Activated CD4-positive, alpha-beta memory T cell treated with anti-CD3 and anti-CD28 coated beads for 36 hours (primary cell): ENCODE measurements at regions of chr19 and their contacts with region 1.

Region 1: GRCh38 chr19:10864538-10864899 is 6.8 kb upstream of the CARM1 start:
- DNase-seq: peak; percentile 91
- H3K4me3 Mint-ChIP-seq: no peak overlapping the region
- H3K27ac Mint-ChIP-seq: no peak overlapping the region
- H3K4me1 Mint-ChIP-seq: peaks cover 13% of the 10 kb centered on the region
- H3K27me3 Mint-ChIP-seq: no peaks in the 10 kb centered on the region

Region 2: DNA sequence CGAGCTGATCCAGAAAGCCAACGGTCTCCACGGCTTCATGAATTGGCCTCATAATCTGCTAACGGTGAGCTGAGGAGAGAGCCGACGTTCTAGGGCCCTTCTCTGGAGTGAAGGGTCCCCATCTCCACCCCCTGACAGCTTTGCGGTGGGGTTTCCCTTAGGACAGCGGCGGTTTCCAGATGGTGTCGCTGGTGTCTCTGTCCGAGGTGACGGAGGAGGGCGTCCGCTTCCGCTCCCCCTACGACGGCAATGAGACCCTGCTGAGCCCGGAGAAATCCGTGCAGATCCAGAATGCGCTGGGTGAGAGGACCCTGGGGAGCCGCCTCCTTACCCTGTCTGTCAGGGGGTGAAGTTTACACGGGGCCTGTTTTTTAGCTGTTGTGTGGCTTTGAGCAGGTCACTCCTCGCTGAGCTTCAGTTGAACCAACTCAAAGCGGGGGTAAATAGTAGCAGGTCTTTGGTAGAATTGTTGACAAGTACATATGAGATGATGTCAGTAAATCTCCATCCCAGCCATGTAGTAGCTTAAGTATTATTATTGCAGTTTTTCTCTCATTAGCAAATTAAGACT is 162.5 kb before region 1 on chr19:
- CTCF ChIA-PET with region 1: interaction called, 26 read pairs
- POLR2A ChIA-PET with region 1: no interaction called
- intact Hi-C with region 1: no loop called
- DNase-seq: peak; percentile 47
- H3K4me3 Mint-ChIP-seq: peak overlapping the region; percentile 88
- H3K27ac Mint-ChIP-seq: peak overlapping the region; percentile 54
- H3K4me1 Mint-ChIP-seq: peaks cover 7% of the 10 kb centered on the region
- H3K27me3 Mint-ChIP-seq: peaks cover 3% of the 10 kb centered on the region

Region 3: DNA sequence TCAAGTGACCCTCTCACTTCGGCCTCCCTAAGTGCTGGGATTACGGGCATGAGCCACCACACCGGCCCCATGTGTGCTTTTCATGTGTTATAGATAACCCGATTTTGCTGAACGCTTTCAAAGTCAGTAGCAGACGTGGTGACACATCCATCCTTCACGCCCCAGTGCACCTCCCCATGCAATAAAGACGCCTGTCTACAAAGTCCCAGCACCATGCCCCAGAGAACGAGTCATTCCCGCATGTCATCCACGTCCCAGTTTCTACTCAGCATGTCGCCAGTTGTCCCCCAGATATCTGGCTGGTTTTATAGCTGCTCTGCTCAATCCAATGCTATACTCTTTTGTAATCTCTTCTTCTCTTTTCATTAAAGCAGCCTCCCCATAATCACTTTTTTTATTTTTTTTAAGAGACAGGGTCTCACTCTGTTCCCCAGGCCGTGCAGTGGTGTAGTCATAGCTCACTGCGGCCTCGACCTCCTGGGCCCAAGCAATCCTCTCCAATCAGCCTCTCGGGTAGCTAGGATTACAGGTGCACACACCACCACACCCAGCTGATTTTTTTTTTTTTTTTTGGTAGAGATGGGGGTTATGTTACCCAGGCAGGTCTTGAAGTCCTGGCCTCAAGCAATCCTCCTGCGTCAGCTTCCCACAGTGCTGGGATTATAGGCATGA is 104.1 kb before region 1 on chr19:
- CTCF ChIA-PET with region 1: interaction called, 12 read pairs
- POLR2A ChIA-PET with region 1: no interaction called
- intact Hi-C with region 1: no loop called
- DNase-seq: peak; percentile 71
- H3K4me3 Mint-ChIP-seq: peak overlapping the region; percentile 71
- H3K27ac Mint-ChIP-seq: peak overlapping the region; percentile 86
- H3K4me1 Mint-ChIP-seq: peaks cover 83% of the 10 kb centered on the region
- H3K27me3 Mint-ChIP-seq: no peaks in the 10 kb centered on the region

Region 4: GRCh38 chr19:10846500-10847202 is 17.9 kb before region 1 on chr19:
- CTCF ChIA-PET with region 1: interaction called, 10 read pairs
- POLR2A ChIA-PET with region 1: no interaction called
- intact Hi-C with region 1: no loop called
- DNase-seq: no peak
- H3K4me3 Mint-ChIP-seq: no peak overlapping the region
- H3K27ac Mint-ChIP-seq: no peak overlapping the region
- H3K4me1 Mint-ChIP-seq: peaks cover 5% of the 10 kb centered on the region
- H3K27me3 Mint-ChIP-seq: peaks cover 2% of the 10 kb centered on the region

Region 5: DNA sequence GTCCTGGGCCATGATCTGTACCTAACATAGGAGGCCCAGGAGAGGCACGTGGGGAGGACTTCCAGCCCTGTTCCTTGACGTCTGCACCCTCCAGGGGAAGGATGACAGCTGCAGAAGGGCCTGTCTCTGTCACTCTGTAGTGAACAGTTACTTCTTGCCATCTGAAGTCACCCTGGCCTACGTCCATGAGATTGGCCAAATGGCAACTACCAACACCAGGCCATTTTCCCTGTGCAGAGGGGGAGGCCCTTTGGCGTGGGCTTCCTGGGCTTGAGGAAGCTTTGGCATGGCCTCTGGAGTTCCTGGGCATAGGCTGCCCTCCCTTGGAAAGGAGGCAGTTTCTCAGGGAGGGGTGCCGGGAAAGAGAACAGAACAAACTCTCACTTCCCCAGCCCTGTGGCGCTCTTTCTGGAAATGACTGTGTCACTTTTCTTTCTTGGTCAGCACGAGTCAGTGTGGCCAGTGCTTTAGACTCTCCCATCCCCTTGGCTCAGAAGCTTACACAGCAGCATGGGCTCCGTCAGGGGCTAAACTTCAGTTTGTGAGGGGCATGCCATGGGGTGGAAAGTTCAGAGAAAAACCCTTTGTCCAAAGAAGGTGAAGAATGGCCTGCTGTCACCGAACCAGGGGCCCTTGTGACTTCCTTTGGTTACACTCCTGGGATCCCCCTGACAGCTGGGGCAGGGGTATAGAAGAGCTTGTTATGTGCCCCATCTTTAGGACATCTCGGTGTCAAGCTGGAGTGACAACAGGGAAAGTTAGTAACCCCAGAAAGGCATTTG is 12.1 kb after region 1 on chr19:
- CTCF ChIA-PET with region 1: interaction called, 21 read pairs
- POLR2A ChIA-PET with region 1: no interaction called
- intact Hi-C with region 1: no loop called
- DNase-seq: peak; percentile 40
- H3K4me3 Mint-ChIP-seq: no peak overlapping the region
- H3K27ac Mint-ChIP-seq: peak overlapping the region; percentile 52
- H3K4me1 Mint-ChIP-seq: peaks cover 38% of the 10 kb centered on the region
- H3K27me3 Mint-ChIP-seq: no peaks in the 10 kb centered on the region

Region 6: GRCh38 chr19:11106477-11106876 is 242.0 kb after region 1 on chr19:
- CTCF ChIA-PET with region 1: no interaction called
- POLR2A ChIA-PET with region 1: no interaction called
- intact Hi-C with region 1: no loop called
- DNase-seq: no peak
- H3K4me3 Mint-ChIP-seq: no peak overlapping the region
- H3K27ac Mint-ChIP-seq: no peak overlapping the region
- H3K4me1 Mint-ChIP-seq: no peaks in the 10 kb centered on the region
- H3K27me3 Mint-ChIP-seq: no peaks in the 10 kb centered on the region

Region 7: DNA sequence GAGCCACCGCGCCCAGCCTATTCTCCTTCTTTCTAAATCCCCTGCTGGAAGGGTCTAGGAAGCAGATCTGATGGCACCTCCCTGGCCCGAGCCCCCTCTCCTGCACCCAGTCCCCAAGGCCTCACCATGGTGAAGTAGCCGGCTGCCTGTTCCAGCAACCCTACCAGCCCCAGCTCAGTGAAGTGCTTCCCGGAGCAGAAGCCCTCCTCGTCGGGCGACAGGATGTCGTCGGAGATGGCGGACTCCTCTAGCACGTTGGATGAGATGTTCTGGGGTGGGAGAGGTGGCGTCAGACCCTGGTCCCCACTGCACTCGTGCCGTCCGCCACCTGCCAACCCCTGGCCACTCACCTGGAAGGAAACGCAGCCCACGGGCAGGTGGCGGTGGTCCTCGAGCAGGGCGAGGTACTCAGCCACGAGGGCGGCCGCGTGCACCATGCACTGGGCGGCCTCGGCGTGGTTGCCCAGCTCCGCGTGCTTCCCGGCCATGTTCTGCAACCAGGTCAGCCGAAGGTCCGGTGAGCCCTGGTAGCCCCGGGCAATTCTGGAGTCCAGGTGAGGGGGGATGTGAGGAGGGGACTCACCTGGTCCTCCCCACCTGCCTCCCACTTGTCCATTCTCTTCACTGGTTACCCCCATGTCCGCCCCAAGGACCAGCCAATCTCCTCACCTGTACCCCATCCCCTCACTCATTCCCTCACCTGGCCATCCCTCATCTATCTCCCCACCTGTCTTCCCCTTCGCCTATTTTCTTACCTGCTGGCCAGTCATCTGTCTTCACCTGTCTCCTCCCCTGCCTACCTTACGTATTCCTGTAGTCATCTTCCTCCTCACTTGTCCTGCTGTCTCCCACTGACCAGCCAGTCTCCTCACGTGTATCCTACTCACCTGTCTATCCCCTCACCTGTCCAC is 344.3 kb after region 1 on chr19:
- CTCF ChIA-PET with region 1: no interaction called
- POLR2A ChIA-PET with region 1: no interaction called
- intact Hi-C with region 1: no loop called
- DNase-seq: no peak
- H3K4me3 Mint-ChIP-seq: no peak overlapping the region
- H3K27ac Mint-ChIP-seq: no peak overlapping the region
- H3K4me1 Mint-ChIP-seq: no peaks in the 10 kb centered on the region
- H3K27me3 Mint-ChIP-seq: peaks cover 1% of the 10 kb centered on the region